ENCODE measurements at regions of chr3 and their contacts with region 1.

Region 1: DNA sequence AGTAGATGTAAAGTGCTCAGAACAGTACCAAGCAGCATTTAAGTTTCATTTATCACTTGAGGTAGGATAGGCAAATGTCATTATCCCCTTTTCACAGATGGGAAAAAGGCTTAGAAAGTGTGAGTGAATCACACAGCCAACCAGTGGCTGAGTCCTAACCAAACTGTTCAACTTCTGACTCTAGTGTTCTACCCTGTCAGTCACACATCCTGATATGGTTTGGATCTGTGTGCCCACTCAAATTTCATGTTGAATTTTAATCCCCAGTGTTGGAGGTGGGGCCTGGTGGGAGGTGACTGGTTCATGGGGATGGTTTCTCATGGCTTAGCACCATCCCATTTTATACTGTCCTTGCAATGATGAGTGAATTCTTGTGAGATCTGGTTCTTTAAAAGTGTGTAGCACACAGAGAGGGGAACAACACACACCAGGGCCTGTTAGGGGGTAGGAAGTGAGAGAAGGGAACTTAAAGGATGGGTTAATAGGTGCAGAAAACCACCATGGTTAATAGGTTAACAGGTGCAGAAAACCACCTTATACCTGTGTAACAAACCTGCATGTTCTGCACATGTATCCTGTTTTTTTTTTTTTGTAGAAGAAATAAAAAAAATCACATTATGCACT is 304.7 kb downstream of the SUCLG2 start:
- DNase-seq: peak; percentile 68
- H3K4me3 Mint-ChIP-seq: no peak overlapping the region
- H3K27ac Mint-ChIP-seq: peak overlapping the region; percentile 2
- H3K4me1 Mint-ChIP-seq: peaks cover 10% of the 10 kb centered on the region
- H3K27me3 Mint-ChIP-seq: no peaks in the 10 kb centered on the region

Region 2: DNA sequence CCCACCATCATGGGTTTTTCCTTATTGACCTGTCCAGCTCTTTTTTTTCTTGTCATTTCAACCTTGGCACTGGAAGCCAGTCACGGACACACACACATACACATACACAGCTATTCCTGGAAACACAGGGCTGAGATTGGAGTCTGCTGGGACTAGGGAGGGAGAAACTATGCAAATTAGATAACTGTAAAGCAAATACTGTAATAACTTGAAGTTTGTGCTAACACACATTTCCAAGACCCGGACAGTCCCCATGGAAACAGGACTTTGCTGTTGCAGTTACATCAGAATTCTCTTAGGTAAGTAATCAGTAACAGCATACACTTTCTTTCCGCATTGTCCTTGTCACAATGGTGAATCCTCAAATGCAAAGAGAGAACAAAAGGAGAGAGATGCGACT is 47.2 kb before region 1 on chr3:
- intact Hi-C with region 1: no loop called
- DNase-seq: no peak
- H3K4me3 Mint-ChIP-seq: no peak overlapping the region
- H3K27ac Mint-ChIP-seq: no peak overlapping the region
- H3K4me1 Mint-ChIP-seq: no peaks in the 10 kb centered on the region
- H3K27me3 Mint-ChIP-seq: peaks cover 3% of the 10 kb centered on the region

Region 3: GRCh38 chr3:67329358-67329757 is 20.3 kb before region 1 on chr3:
- intact Hi-C with region 1: loop called (anchors 1 kb)
- DNase-seq: no peak
- H3K4me3 Mint-ChIP-seq: no peak overlapping the region
- H3K27ac Mint-ChIP-seq: peak overlapping the region; percentile 4
- H3K4me1 Mint-ChIP-seq: peaks cover 13% of the 10 kb centered on the region
- H3K27me3 Mint-ChIP-seq: peaks cover 3% of the 10 kb centered on the region

Region 4: GRCh38 chr3:67334588-67334987 is 15.1 kb before region 1 on chr3:
- intact Hi-C with region 1: loop called (anchors 1 kb)
- DNase-seq: no peak
- H3K4me3 Mint-ChIP-seq: no peak overlapping the region
- H3K27ac Mint-ChIP-seq: no peak overlapping the region
- H3K4me1 Mint-ChIP-seq: peaks cover 9% of the 10 kb centered on the region
- H3K27me3 Mint-ChIP-seq: peaks cover 3% of the 10 kb centered on the region